ENCODE measurements at regions of chr15 and their contacts with region 1.

Region 1: GRCh38 chr15:48965972-48966371 is 2.3 kb upstream of the SHC4 start:
- DNase-seq: peak; percentile 72
- H3K4me3 Mint-ChIP-seq: peak overlapping the region; percentile 58
- H3K27ac Mint-ChIP-seq: peak overlapping the region; percentile 93
- H3K4me1 Mint-ChIP-seq: peaks cover 53% of the 10 kb centered on the region
- H3K27me3 Mint-ChIP-seq: peaks cover 2% of the 10 kb centered on the region

Region 2: GRCh38 chr15:48946088-48946839 is 19.7 kb before region 1 on chr15:
- intact Hi-C with region 1: loop called (anchors 2 kb)
- DNase-seq: no peak
- H3K4me3 Mint-ChIP-seq: no peak overlapping the region
- H3K27ac Mint-ChIP-seq: peak overlapping the region; percentile 82
- H3K4me1 Mint-ChIP-seq: peaks cover 20% of the 10 kb centered on the region
- H3K27me3 Mint-ChIP-seq: no peaks in the 10 kb centered on the region

Region 3: GRCh38 chr15:49145651-49146609 is 180.0 kb after region 1 on chr15:
- intact Hi-C with region 1: loop called (anchors 5 kb)
- DNase-seq: peak; percentile 80
- H3K4me3 Mint-ChIP-seq: no peak overlapping the region
- H3K27ac Mint-ChIP-seq: no peak overlapping the region
- H3K4me1 Mint-ChIP-seq: peaks cover 22% of the 10 kb centered on the region
- H3K27me3 Mint-ChIP-seq: no peaks in the 10 kb centered on the region

Region 4: DNA sequence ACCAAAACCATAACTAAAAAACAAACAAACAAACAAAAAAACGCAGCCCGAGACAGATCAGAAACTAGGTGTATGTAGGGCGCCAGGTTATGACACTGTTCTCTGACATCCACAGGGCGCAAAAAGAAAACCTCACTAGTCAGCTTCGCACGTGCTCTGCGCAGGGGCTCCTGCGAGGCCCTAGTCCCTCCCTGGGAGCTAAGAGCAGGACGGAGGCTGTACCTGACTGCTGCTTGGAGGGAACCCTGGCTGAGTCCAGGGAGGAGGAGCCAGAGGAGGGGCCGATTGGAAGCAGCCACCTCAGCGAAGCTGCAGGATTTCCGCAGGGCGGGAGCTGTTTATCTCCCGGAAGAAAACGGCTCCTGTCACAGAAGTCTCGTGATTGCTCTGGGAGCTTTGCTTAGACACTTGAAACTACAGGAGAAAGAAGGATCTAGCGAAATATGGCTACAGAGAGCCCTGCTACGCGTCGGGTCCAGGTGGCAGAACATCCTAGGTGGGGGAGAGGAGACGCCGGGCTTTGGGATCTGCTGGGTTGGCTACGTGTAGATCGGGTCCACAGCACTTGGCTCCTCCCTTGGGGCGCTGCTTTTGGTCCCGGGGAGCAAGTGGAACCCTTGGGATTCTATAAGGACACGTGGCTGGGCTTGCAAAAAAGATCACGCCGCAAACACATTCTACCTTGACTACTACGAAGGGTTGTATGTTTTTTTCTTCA is 204.1 kb after region 1 on chr15 and contains the start of gene GALK2:
- intact Hi-C with region 1: no loop called
- DNase-seq: peak; percentile 95
- H3K4me3 Mint-ChIP-seq: peak within 1 kb of the TSS; percentile 100
- H3K27ac Mint-ChIP-seq: peak within 1 kb of the TSS; percentile 99
- H3K4me1 Mint-ChIP-seq: peaks cover 26% of the 10 kb centered on the region
- H3K27me3 Mint-ChIP-seq: no peaks in the 10 kb centered on the region
- total RNA-seq, gene GALK2: 24.7 and 25.5 TPM in 2 replicates

Measured in activated CD4-positive, alpha-beta T cell treated with anti-CD3 and anti-CD28 coated beads, Interleukin-2, amount 10 ng/mL, durations not matched to agents 24 days and 14 days (primary cell).